ENCODE measurements at regions of chr13 and their contacts with region 1.

Region 1: GRCh38 chr13:31236211-31236786 is 36.5 kb downstream of the B3GLCT start:
- DNase-seq: peak; percentile 53
- H3K4me3 Mint-ChIP-seq: no peak overlapping the region
- H3K27ac Mint-ChIP-seq: no peak overlapping the region
- H3K4me1 Mint-ChIP-seq: no peaks in the 10 kb centered on the region
- H3K27me3 Mint-ChIP-seq: no peaks in the 10 kb centered on the region
- CTCF ChIP-seq: peak; percentile 42

Region 2: DNA sequence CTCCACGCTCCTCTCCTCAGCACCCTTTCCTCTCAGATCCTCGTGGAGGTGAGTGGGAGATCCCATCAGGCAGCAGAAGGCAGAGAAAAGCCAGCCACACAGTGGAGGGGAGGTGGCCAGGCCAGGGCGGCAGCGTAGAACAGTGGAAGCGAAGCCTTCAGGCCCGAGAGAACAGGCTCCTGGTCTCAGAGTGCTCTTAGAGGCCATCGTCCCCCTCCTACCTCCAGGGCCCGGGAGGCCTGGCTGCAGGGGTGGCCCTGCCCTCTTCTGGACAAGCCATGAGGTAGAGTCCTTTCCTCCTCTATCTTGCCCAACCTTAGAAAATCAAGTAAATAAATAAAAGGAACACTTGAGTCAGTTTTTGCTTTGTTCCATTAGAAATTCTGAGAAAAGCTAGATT is 1130.9 kb before region 1 on chr13:
- CTCF ChIA-PET with region 1: no interaction called
- POLR2A ChIA-PET with region 1: no interaction called
- intact Hi-C with region 1: no loop called
- DNase-seq: no peak
- H3K4me3 Mint-ChIP-seq: no peak overlapping the region
- H3K27ac Mint-ChIP-seq: no peak overlapping the region
- H3K4me1 Mint-ChIP-seq: peaks cover 20% of the 10 kb centered on the region
- H3K27me3 Mint-ChIP-seq: no peaks in the 10 kb centered on the region
- CTCF ChIP-seq: no peak

Region 3: GRCh38 chr13:31221057-31221456 is 15.2 kb before region 1 on chr13:
- CTCF ChIA-PET with region 1: interaction called, 15 read pairs
- POLR2A ChIA-PET with region 1: no interaction called
- intact Hi-C with region 1: no loop called
- DNase-seq: no peak
- H3K4me3 Mint-ChIP-seq: no peak overlapping the region
- H3K27ac Mint-ChIP-seq: no peak overlapping the region
- H3K4me1 Mint-ChIP-seq: peaks cover 5% of the 10 kb centered on the region
- H3K27me3 Mint-ChIP-seq: no peaks in the 10 kb centered on the region
- CTCF ChIP-seq: no peak

Region 4: GRCh38 chr13:31409678-31410356 is 173.5 kb after region 1 on chr13:
- CTCF ChIA-PET with region 1: interaction called, 148 read pairs
- POLR2A ChIA-PET with region 1: no interaction called
- intact Hi-C with region 1: loop called (anchors 5 kb)
- DNase-seq: peak; percentile 16
- H3K4me3 Mint-ChIP-seq: no peak overlapping the region
- H3K27ac Mint-ChIP-seq: no peak overlapping the region
- H3K4me1 Mint-ChIP-seq: no peaks in the 10 kb centered on the region
- H3K27me3 Mint-ChIP-seq: peaks cover 12% of the 10 kb centered on the region
- CTCF ChIP-seq: no peak

Region 5: GRCh38 chr13:31653730-31654129 is 417.4 kb after region 1 on chr13:
- CTCF ChIA-PET with region 1: no interaction called
- POLR2A ChIA-PET with region 1: no interaction called
- intact Hi-C with region 1: no loop called
- DNase-seq: no peak
- H3K4me3 Mint-ChIP-seq: no peak overlapping the region
- H3K27ac Mint-ChIP-seq: no peak overlapping the region
- H3K4me1 Mint-ChIP-seq: no peaks in the 10 kb centered on the region
- H3K27me3 Mint-ChIP-seq: no peaks in the 10 kb centered on the region
- CTCF ChIP-seq: no peak

Region 6: GRCh38 chr13:31742097-31742734 is 505.9 kb after region 1 on chr13:
- CTCF ChIA-PET with region 1: interaction called, 10 read pairs
- POLR2A ChIA-PET with region 1: no interaction called
- intact Hi-C with region 1: loop called (anchors 1 kb)
- DNase-seq: peak; percentile 73
- H3K4me3 Mint-ChIP-seq: no peak overlapping the region
- H3K27ac Mint-ChIP-seq: no peak overlapping the region
- H3K4me1 Mint-ChIP-seq: peaks cover 5% of the 10 kb centered on the region
- H3K27me3 Mint-ChIP-seq: peaks cover 16% of the 10 kb centered on the region
- CTCF ChIP-seq: peak; percentile 90